ENCODE measurements at regions of chr6 and their contacts with region 1.

Region 1: DNA sequence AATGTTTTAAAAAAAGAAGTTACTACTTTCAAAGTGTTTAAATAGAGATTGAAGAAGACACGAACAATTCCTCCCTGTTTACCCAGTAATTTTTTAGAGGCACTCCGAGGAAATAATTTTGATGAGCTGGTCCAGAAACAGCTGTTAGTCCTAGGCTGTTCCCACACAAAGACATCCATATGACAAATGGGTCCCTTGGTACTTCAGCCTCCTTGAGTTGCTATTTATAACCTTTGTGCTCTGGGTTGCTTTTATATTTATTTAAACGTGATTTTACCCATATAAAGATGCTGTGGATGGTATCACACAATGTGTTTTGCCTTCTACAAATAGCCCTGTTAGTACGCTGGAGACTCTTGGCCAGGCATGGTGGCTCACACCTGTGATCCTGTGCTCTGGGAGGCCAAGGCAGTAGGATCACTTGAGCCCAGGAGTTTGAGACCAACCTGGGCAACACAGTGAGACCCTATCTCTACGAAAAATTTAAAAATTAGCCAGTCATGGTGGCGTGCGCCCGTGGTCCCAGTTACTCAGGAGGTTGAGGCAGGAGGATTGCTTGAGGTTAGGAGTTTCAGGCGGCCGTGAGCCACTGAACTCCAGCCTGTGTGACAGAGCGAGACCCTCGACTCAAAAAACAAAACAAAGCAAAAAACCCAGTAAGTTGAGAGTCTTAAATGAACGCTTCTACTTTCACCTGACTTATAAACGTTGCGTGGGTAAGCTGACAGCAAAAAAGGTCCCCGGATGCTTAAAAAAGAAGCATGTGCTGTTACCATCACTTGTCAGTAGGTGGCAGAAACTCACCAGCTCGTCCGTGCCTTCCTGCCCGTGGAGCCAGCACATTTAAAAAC is 56.9 kb upstream of the ARMH2 start:
- DNase-seq: peak; percentile 47
- H3K4me3 ChIP-seq: no peak overlapping the region
- CTCF ChIP-seq: peak; percentile 88

Region 2: GRCh38 chr6:24824142-24824938 is 31.3 kb before region 1 on chr6:
- in situ Hi-C with region 1: no loop called
- DNase-seq: no peak
- H3K4me3 ChIP-seq: no peak overlapping the region
- CTCF ChIP-seq: no peak

Region 3: DNA sequence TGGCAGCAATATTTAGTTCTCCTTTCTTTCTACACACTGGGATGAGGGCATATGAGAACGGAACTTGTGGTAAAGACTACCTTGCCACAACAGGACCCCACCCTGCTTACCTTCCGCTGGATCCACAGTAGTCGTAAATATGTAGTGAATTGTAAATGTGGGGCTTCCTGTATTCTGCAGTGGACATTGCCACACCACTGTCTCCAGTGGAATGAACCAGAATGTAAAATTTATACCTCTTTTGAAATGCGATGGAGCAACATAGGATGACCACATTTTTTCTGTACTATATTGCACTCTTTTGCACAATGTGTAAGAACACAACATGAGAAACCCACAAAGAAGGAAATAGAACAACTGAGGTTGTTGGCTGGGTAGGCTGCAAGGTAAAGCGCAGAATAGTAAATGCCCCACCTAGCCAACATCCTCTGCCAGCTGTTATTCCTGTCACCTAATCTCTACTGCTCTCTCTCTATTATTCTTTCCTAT is 96.2 kb after region 1 on chr6:
- in situ Hi-C with region 1: no loop called
- DNase-seq: no peak
- H3K4me3 ChIP-seq: no peak overlapping the region
- CTCF ChIP-seq: no peak

Region 4: DNA sequence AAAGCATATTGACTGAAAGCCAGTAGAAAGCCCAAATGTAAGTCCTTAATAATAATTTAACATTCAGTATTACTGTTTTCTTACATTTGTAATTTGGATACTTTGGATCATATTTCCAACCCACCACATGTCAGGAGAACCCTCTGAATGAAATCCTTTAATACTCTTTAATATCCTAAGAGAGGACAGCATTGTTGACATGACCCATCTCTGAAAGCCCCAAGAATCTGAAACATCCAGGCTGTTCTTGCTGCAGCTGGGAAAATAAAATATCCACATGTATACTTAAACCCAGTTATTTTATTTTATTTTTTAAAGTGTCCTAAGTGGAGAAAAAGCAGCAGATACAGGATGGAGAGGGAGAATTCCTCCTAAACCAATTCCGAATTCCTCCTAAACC is 211.0 kb after region 1 on chr6:
- in situ Hi-C with region 1: loop called (anchors 5 kb)
- DNase-seq: no peak
- H3K4me3 ChIP-seq: no peak overlapping the region
- CTCF ChIP-seq: no peak

Region 5: GRCh38 chr6:25156096-25156495 is 300.5 kb after region 1 on chr6:
- in situ Hi-C with region 1: no loop called
- DNase-seq: no peak
- H3K4me3 ChIP-seq: no peak overlapping the region
- CTCF ChIP-seq: no peak